Right cardiac atrium (tissue), 5 donors: ENCODE measurements at regions of chr11 and their contacts with region 1.

Region 1: GRCh38 chr11:120511116-120511819 is at the start of gene GRIK4:
- DNase-seq: peak; percentile 86 to 94 (median 93)
- ATAC-seq: peak; percentile 87 to 89
- H3K4me3 ChIP-seq: peak within 1 kb of the TSS; percentile 86
- H3K27ac ChIP-seq: no peak within 1 kb of the TSS
- H3K4me1 ChIP-seq: no peaks in the 10 kb centered on the region
- H3K27me3 ChIP-seq: no peaks in the 10 kb centered on the region
- total RNA-seq, gene GRIK4: 0.59 to 3.4 (median 1.0) TPM in 3 of 4 donors, not detected in the other

Region 2: GRCh38 chr11:120462825-120463224 is 48.4 kb before region 1 on chr11:
- intact Hi-C with region 1: no loop called
- DNase-seq: no peak
- ATAC-seq: no peak
- H3K4me3 ChIP-seq: no peak overlapping the region
- H3K27ac ChIP-seq: no peak overlapping the region
- H3K4me1 ChIP-seq: no peaks in the 10 kb centered on the region
- H3K27me3 ChIP-seq: no peaks in the 10 kb centered on the region

Region 3: DNA sequence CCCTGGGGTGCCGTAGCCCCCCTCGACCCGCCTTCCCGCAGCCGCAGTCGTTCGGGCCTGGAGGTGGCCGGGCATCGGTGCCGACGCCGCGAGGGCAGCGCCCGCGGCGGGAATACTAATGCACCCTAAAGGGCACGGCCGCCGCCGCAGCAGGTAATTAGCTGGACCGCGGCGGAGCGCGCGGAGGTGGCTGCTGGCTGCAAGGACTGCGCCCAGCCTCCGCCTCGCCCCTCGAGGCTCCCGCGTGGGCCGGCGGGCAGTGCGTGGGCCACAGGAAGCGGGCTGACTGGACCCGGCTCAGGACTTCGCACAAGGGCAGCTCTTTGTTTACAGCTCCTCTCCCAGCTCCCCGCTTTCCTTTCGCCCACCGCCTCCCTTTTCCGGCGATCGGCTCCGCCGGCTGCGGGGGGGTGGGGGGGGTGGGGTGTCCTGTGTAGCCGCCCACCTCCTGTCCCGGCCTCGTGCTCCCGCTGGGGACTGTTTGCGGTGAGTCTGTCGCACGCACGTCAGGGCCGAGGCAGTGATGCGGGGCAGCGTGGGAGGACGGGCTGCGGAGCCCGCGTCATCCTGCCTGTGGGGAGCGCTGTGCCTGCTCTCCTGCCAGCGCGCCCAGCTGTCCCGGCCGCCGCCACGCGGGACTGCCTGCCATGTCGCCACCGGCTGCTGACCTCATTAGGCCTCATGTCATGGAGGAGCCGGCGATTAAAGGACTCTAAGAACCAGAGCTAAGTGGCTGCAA is 53.5 kb after region 1 on chr11:
- intact Hi-C with region 1: loop called in 1 of 4 experiments (anchors 10 kb)
- DNase-seq: peak; percentile 75 to 86 (median 84)
- ATAC-seq: peak; percentile 79 to 81
- H3K4me3 ChIP-seq: peak overlapping the region; percentile 41
- H3K27ac ChIP-seq: no peak overlapping the region
- H3K4me1 ChIP-seq: peaks cover 2% of the 10 kb centered on the region
- H3K27me3 ChIP-seq: no peaks in the 10 kb centered on the region

Region 4: GRCh38 chr11:120682866-120683265 is 171.6 kb after region 1 on chr11:
- intact Hi-C with region 1: loop called (anchors 1 to 5 kb)
- DNase-seq: no peak
- ATAC-seq: no peak
- H3K4me3 ChIP-seq: no peak overlapping the region
- H3K27ac ChIP-seq: no peak overlapping the region
- H3K4me1 ChIP-seq: no peaks in the 10 kb centered on the region
- H3K27me3 ChIP-seq: no peaks in the 10 kb centered on the region

Region 5: DNA sequence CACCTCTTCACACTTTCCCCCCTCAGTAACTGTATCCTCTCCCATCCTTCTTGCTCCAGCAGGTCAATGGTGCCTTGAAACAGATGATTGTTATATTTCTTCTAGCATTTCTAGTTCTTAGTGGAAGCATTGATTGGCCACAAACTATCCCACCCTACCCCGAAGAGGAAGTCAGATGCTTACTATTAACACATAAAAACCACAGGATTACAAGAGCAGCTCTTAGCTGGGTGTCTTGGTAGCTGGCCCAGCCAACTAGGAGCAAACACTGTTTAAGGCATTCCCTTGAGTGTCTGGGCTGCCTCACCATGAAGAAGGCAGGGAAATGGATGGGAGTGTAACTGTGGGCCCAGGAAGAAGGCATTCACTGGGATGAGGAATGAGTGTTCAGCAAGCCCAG is 176.9 kb after region 1 on chr11:
- intact Hi-C with region 1: loop called (anchors 1 to 5 kb)
- DNase-seq: no peak
- ATAC-seq: no peak
- H3K4me3 ChIP-seq: no peak overlapping the region
- H3K27ac ChIP-seq: no peak overlapping the region
- H3K4me1 ChIP-seq: no peaks in the 10 kb centered on the region
- H3K27me3 ChIP-seq: no peaks in the 10 kb centered on the region

Region 6: GRCh38 chr11:120801801-120802689 is 290.8 kb after region 1 on chr11:
- intact Hi-C with region 1: loop called (anchors 2 to 10 kb)
- DNase-seq: peak; percentile 54 to 83 (median 66)
- ATAC-seq: peak; percentile 56 to 70
- H3K4me3 ChIP-seq: no peak overlapping the region
- H3K27ac ChIP-seq: no peak overlapping the region
- H3K4me1 ChIP-seq: no peaks in the 10 kb centered on the region
- H3K27me3 ChIP-seq: no peaks in the 10 kb centered on the region

Region 7: GRCh38 chr11:120952461-120953434 is 441.5 kb after region 1 on chr11:
- intact Hi-C with region 1: loop called in 3 of 4 experiments (anchors 2 to 10 kb)
- DNase-seq: peak; percentile 74 to 93 (median 89)
- ATAC-seq: peak; percentile 90
- H3K4me3 ChIP-seq: no peak overlapping the region
- H3K27ac ChIP-seq: no peak overlapping the region
- H3K4me1 ChIP-seq: peaks cover 3% of the 10 kb centered on the region
- H3K27me3 ChIP-seq: no peaks in the 10 kb centered on the region

Region 8: DNA sequence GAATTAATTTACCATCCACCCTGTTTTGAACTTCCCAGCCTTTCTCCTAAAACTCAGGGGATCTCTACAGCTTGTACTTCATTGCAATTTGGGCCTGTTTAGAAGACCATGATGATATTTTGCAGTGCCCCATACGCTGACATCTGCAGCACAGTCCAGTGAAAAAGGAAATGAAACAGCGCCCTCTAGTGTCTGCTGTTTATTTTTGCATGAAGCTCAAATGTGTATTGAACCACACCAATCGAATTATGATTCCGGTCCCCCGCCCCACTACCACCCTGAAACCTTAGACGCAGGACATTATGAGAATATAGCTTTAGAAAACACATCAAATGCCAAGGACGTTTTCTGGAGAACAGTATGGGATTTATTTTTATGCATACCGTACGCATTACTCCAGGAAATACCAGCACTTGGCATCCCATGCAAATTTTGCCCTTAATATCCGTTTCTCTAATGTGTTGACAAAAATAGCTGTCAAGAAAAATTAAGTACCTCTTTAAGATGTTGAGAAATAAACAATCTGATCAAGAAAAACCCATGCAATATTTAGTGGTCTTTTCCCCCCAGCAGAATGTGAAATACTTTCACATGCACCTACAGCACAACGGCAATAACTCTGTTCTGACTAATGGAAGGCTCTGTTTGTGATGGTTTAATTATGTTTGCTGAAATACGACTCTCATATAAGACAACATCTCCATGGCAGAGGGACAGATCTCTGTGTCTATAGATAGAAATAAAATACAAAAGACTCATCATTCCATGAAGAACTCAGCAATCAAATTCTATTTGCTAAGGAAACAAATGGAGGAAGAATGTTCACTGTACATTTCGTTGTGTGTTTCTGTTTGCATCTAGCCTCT is 683.7 kb after region 1 on chr11:
- intact Hi-C with region 1: loop called in 2 of 4 experiments (anchors 10 kb)
- DNase-seq: no peak
- ATAC-seq: peak; percentile 81 to 83
- H3K4me3 ChIP-seq: no peak overlapping the region
- H3K27ac ChIP-seq: no peak overlapping the region
- H3K4me1 ChIP-seq: no peaks in the 10 kb centered on the region
- H3K27me3 ChIP-seq: no peaks in the 10 kb centered on the region